Activated CD8-positive, alpha-beta T cell treated with anti-CD3 and anti-CD28 coated beads, Interleukin-2, amount 10 ng/mL, durations not matched to agents 7 days and 5 days (primary cell): ENCODE measurements at regions of chr3 and their contacts with region 1.

Region 1: DNA sequence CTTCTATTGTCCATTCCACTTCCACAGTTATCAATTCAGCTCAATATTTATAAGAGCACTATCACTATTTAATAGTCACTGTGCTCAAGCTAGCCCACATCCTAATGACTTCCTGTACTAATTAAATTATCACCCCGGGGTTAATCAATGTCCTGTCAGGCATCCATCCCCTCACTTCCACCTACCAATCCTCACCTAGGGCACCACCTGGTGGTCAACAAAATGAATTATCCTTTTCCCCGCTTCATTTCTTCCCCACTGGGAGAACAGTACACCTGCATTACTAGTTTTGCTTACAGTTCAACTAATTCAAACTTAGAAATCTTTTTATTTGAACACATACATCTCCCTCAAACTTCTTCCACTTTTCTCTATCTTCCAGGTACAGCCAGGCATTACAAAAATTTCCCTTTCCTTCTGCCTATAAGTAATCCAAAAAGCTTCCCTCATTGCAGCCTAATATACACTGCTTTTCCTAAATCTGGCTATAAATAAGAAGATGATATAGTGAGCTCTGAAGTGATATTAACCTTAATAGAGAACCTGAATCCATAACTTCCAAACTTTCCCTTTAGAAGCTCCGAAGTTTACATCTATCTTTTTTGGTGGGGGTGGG is 68.5 kb downstream of the TMCC1 start:
- DNase-seq: peak; percentile 63
- ATAC-seq: peak; percentile 60
- H3K4me3 Mint-ChIP-seq: no peak overlapping the region
- H3K27ac Mint-ChIP-seq: no peak overlapping the region
- H3K4me1 Mint-ChIP-seq: peaks cover 22% of the 10 kb centered on the region
- H3K27me3 Mint-ChIP-seq: no peaks in the 10 kb centered on the region

Region 2: GRCh38 chr3:129490242-129491045 is 334.6 kb before region 1 on chr3:
- CTCF ChIA-PET with region 1: interaction called, 17 read pairs
- POLR2A ChIA-PET with region 1: no interaction called
- DNase-seq: peak; percentile 65
- ATAC-seq: peak; percentile 95
- H3K4me3 Mint-ChIP-seq: no peak overlapping the region
- H3K27ac Mint-ChIP-seq: no peak overlapping the region
- H3K4me1 Mint-ChIP-seq: no peaks in the 10 kb centered on the region
- H3K27me3 Mint-ChIP-seq: no peaks in the 10 kb centered on the region

Region 3: GRCh38 chr3:129627429-129628168 is 197.4 kb before region 1 on chr3:
- CTCF ChIA-PET with region 1: interaction called, 27 read pairs
- POLR2A ChIA-PET with region 1: no interaction called
- DNase-seq: peak; percentile 77
- ATAC-seq: peak; percentile 52
- H3K4me3 Mint-ChIP-seq: peak overlapping the region; percentile 75
- H3K27ac Mint-ChIP-seq: peak overlapping the region; percentile 76
- H3K4me1 Mint-ChIP-seq: peaks cover 26% of the 10 kb centered on the region
- H3K27me3 Mint-ChIP-seq: peaks cover 11% of the 10 kb centered on the region

Region 4: GRCh38 chr3:129645290-129645689 is 179.7 kb before region 1 on chr3:
- CTCF ChIA-PET with region 1: interaction called, 17 read pairs
- POLR2A ChIA-PET with region 1: no interaction called
- DNase-seq: no peak
- ATAC-seq: no peak
- H3K4me3 Mint-ChIP-seq: no peak overlapping the region
- H3K27ac Mint-ChIP-seq: no peak overlapping the region
- H3K4me1 Mint-ChIP-seq: no peaks in the 10 kb centered on the region
- H3K27me3 Mint-ChIP-seq: peaks cover 9% of the 10 kb centered on the region

Region 5: DNA sequence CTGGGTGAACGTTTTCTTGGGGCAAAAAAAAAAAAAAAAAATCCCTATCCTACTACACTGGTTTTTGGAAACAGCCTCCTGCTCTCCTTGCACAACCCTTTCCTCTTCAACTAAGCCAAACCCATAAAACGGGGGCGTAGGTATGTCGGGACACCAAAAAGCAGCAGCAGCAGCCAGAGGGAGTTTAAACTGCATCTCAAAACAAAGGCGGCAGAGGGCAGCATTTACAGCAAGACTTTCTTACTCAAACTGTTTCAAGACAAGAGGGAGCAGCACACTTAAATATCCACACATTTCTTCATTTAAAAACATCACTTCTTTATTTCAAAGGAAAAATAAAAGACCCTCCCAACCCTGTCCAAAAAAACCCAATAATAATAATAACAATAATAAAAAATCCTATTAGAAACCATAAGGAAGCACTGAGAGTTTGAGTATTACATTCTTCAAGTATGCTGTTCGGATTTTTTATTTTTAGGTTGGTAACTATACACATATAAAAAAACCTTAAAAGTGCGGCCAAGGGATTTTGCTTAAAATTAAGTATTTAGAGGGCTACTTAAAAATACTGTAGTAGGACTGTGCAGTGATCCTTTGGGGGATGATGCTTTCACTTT is 174.7 kb before region 1 on chr3:
- CTCF ChIA-PET with region 1: interaction called, 17 read pairs
- POLR2A ChIA-PET with region 1: no interaction called
- DNase-seq: peak; percentile 74
- ATAC-seq: no peak
- H3K4me3 Mint-ChIP-seq: no peak overlapping the region
- H3K27ac Mint-ChIP-seq: no peak overlapping the region
- H3K4me1 Mint-ChIP-seq: no peaks in the 10 kb centered on the region
- H3K27me3 Mint-ChIP-seq: peaks cover 1% of the 10 kb centered on the region